WTC11 (cell line): ENCODE measurements at regions of chr14 and their contacts with region 1.

Region 1: GRCh38 chr14:21039585-21040369 is 2.4 kb upstream of the RNASE7 start:
- DNase-seq: peak; percentile 33
- ATAC-seq: peak; percentile 74
- H3K4me3 Mint-ChIP-seq: peak overlapping the region; percentile 25
- H3K27ac Mint-ChIP-seq: peak overlapping the region; percentile 72; the same call in 1 of the 2 replicates
- H3K4me1 Mint-ChIP-seq: peaks cover 26% of the 10 kb centered on the region
- H3K27me3 Mint-ChIP-seq: peaks cover 3% of the 10 kb centered on the region; the same call in 1 of the 2 replicates
- CTCF ChIP-seq: 0 out of 2 replicates have a peak, but pooled peaks have one; percentile 25

Region 2: GRCh38 chr14:20633429-20633771 is 406.4 kb before region 1 on chr14:
- CTCF ChIA-PET with region 1: no interaction called
- POLR2A ChIA-PET with region 1: no interaction called
- DNase-seq: peak; percentile 61
- ATAC-seq: peak; percentile 13
- H3K4me3 Mint-ChIP-seq: peak overlapping the region; percentile 93
- H3K27ac Mint-ChIP-seq: peak overlapping the region; percentile 78; the same call in 1 of the 2 replicates
- H3K4me1 Mint-ChIP-seq: peaks cover 8% of the 10 kb centered on the region
- H3K27me3 Mint-ChIP-seq: peaks cover 46% of the 10 kb centered on the region
- CTCF ChIP-seq: no peak

Region 3: GRCh38 chr14:20873370-20874177 is 166.2 kb before region 1 on chr14:
- CTCF ChIA-PET with region 1: interaction called, 14 read pairs
- POLR2A ChIA-PET with region 1: no interaction called
- DNase-seq: peak; percentile 95
- ATAC-seq: peak; percentile 98
- H3K4me3 Mint-ChIP-seq: peak overlapping the region; percentile 58
- H3K27ac Mint-ChIP-seq: peak overlapping the region; percentile 49; the same call in 1 of the 2 replicates
- H3K4me1 Mint-ChIP-seq: peaks cover 9% of the 10 kb centered on the region
- H3K27me3 Mint-ChIP-seq: peaks cover 48% of the 10 kb centered on the region
- CTCF ChIP-seq: peak; percentile 74

Region 4: GRCh38 chr14:21003788-21004346 is 35.9 kb before region 1 on chr14:
- CTCF ChIA-PET with region 1: interaction called, 37 read pairs
- POLR2A ChIA-PET with region 1: no interaction called
- DNase-seq: no peak
- ATAC-seq: no peak
- H3K4me3 Mint-ChIP-seq: no peak overlapping the region
- H3K27ac Mint-ChIP-seq: no peak overlapping the region
- H3K4me1 Mint-ChIP-seq: peaks cover 9% of the 10 kb centered on the region
- H3K27me3 Mint-ChIP-seq: no peaks in the 10 kb centered on the region; the same call in 1 of the 2 replicates
- CTCF ChIP-seq: no peak

Region 5: DNA sequence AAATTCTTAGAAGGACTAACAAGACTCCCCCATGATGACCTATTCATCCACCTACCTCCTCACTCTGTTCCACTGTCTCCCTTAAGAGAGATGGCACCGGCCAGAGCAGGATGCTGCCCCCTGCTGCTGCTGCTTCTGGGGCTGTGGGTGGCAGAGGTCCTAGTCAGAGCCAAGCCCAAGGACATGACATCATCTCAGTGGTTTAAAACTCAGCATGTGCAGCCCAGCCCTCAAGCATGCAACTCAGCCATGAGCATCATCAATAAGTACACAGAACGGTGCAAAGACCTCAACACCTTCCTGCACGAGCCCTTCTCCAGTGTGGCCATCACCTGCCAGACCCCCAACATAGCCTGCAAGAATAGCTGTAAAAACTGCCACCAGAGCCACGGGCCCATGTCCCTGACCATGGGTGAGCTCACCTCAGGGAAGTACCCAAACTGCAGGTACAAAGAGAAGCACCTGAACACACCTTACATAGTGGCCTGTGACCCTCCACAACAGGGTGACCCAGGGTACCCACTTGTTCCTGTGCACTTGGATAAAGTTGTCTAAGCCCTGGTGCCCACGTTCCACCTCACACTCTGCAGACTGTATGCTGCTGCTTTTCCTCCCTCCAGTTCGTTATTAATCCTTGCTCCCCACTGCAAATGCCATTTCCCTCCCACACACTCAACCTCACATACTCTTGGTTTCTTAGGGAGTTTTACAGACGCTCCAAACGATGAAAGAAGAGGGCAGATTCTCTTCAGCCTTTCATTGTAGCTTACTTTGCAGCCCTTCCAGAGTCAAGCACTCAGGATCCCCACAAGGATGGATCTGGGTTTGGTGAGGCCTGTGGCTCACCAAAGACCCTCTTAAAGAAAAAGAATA is 18.3 kb after region 1 on chr14 and contains the start of gene RNASE8:
- CTCF ChIA-PET with region 1: interaction called, 17 read pairs
- POLR2A ChIA-PET with region 1: no interaction called
- DNase-seq: no peak
- ATAC-seq: no peak
- H3K4me3 Mint-ChIP-seq: no peak within 1 kb of the TSS
- H3K27ac Mint-ChIP-seq: no peak within 1 kb of the TSS
- H3K4me1 Mint-ChIP-seq: peaks cover 7% of the 10 kb centered on the region
- H3K27me3 Mint-ChIP-seq: no peaks in the 10 kb centered on the region
- CTCF ChIP-seq: no peak
- total RNA-seq, gene RNASE8: not detected in 3 replicates

Region 6: DNA sequence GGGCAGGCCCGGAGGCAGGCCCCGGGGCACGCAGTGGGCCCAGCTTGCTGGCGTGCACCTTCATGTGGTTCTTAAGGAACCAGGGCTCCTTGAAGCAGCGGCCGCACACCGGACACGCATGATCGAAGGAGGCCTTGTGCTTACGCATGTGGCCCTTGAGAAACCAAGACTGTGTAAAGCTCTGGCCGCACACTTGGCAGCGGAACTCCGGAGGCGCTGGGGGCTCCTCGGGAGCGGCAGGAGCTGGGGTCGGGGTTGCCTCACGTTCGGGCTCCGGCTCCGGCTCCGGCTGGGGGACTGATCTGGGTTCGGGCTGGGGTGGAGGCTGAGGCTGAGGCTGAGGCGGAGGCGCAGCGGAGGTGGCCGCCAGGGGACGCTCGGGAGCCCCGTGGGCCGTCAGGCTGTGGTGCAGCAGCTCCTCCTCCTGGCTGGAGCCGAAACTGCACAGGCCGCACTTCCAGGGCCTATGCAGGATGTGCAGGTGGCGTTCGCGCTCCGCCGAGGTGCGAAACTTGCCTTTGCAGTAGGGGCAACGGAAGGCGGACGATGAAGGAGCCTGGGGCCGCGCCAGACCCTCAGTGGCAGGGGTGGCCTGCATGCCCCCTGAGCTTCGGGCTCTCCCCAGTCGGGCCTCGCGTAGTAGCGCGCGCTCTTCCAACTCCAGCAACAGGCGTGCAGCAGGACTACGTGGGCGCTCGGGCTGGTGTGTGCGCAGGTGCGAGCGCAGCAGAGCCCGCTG is 52.7 kb after region 1 on chr14:
- CTCF ChIA-PET with region 1: interaction called, 36 read pairs
- POLR2A ChIA-PET with region 1: interaction called, 4 read pairs
- DNase-seq: peak; percentile 94
- ATAC-seq: peak; percentile 27
- H3K4me3 Mint-ChIP-seq: peak overlapping the region; percentile 66
- H3K27ac Mint-ChIP-seq: peak overlapping the region; percentile 94
- H3K4me1 Mint-ChIP-seq: peaks cover 64% of the 10 kb centered on the region
- H3K27me3 Mint-ChIP-seq: no peaks in the 10 kb centered on the region
- CTCF ChIP-seq: peak; percentile 100